CD4-positive, alpha-beta memory T cell (primary cell): ENCODE measurements at regions of chr12 and their contacts with region 1.

Region 1: GRCh38 chr12:8681041-8681902 is 16.5 kb upstream of the RIMKLB start:
- DNase-seq: no peak
- H3K4me3 ChIP-seq: no peak overlapping the region
- H3K4me3 Mint-ChIP-seq: no peak overlapping the region
- H3K27ac ChIP-seq: no peak overlapping the region
- H3K27ac Mint-ChIP-seq: peak overlapping the region in 1 of 7 donors; percentile 30
- H3K4me1 ChIP-seq: no peaks in the 10 kb centered on the region
- H3K4me1 Mint-ChIP-seq: peaks cover 0 to 9% (median 5%) of the 10 kb centered on the region in 4 donors
- H3K27me3 ChIP-seq: no peaks in the 10 kb centered on the region
- H3K27me3 Mint-ChIP-seq: peaks cover 5 to 10% of the 10 kb centered on the region in 2 donors

Region 2: GRCh38 chr12:8662593-8662992 is 18.7 kb before region 1 on chr12 and contains the start of gene MFAP5:
- CTCF ChIA-PET with region 1: interaction called, 17 read pairs
- POLR2A ChIA-PET with region 1: interaction called, 3 read pairs
- intact Hi-C with region 1: no loop called
- DNase-seq: no peak
- H3K4me3 ChIP-seq: no peak within 1 kb of the TSS
- H3K4me3 Mint-ChIP-seq: no peak within 1 kb of the TSS
- H3K27ac ChIP-seq: no peak within 1 kb of the TSS
- H3K27ac Mint-ChIP-seq: no peak within 1 kb of the TSS
- H3K4me1 ChIP-seq: no peaks in the 10 kb centered on the region
- H3K4me1 Mint-ChIP-seq: no peaks in the 10 kb centered on the region
- H3K27me3 ChIP-seq: no peaks in the 10 kb centered on the region
- H3K27me3 Mint-ChIP-seq: peaks cover 5% of the 10 kb centered on the region in 2 donors
- total RNA-seq, gene MFAP5: not detected

Region 3: GRCh38 chr12:8697476-8698131 is 16.3 kb after region 1 on chr12 and contains the start of gene RIMKLB:
- CTCF ChIA-PET with region 1: interaction called, 10 read pairs
- POLR2A ChIA-PET with region 1: interaction called, 13 read pairs
- intact Hi-C with region 1: no loop called
- DNase-seq: peak; percentile 69 to 77 (median 75)
- H3K4me3 ChIP-seq: peak within 1 kb of the TSS; percentile 38 to 74
- H3K4me3 Mint-ChIP-seq: peak within 1 kb of the TSS; percentile 90 to 96 (median 92)
- H3K27ac ChIP-seq: peak within 1 kb of the TSS; percentile 59
- H3K27ac Mint-ChIP-seq: peak within 1 kb of the TSS; percentile 87 to 97 (median 91)
- H3K4me1 ChIP-seq: peaks cover 18% of the 10 kb centered on the region
- H3K4me1 Mint-ChIP-seq: peaks cover 19 to 29% (median 22%) of the 10 kb centered on the region in 4 donors
- H3K27me3 ChIP-seq: no peaks in the 10 kb centered on the region
- H3K27me3 Mint-ChIP-seq: no peaks in the 10 kb centered on the region
- total RNA-seq, gene RIMKLB: 23.0 to 27.3 TPM

Region 4: DNA sequence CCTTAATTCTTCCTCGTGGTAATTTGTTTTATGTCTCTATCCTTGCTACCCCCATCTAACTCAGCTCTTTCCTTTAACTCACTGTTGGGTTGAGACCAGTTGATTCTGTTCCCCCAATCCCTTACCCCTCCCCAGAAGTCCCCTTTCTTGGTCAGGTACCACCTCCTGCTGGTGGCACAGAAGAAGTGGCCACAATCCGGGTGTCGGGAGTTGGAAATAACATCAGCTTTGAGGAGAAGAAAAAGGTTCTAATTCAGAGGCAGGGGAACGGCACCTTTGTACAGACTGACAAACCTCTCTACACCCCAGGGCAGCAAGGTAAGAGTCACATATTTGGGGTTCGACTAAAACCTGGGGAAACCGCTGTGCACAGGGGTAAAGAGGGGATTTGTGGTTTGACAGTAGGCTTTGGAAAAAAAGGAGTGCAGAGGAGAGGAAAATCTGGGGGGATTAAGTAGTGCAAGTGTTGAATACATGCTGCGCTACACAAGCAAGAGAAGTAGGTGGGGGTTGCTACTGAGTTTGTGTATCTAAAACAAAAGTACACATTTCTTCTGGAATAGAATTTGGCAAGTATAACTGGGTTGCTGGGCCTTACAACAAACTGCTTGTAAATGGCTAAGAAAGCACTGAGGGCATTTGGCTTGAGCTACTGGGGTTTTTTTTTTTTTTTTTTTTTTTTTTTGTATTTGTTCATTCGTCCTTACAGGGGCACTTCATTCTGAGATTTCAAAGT is 142.5 kb after region 1 on chr12:
- CTCF ChIA-PET with region 1: no interaction called
- POLR2A ChIA-PET with region 1: interaction called, 3 read pairs
- intact Hi-C with region 1: loop called (anchors 1 kb)
- DNase-seq: no peak
- H3K4me3 ChIP-seq: no peak overlapping the region
- H3K4me3 Mint-ChIP-seq: no peak overlapping the region
- H3K27ac ChIP-seq: no peak overlapping the region
- H3K27ac Mint-ChIP-seq: no peak overlapping the region
- H3K4me1 ChIP-seq: no peaks in the 10 kb centered on the region
- H3K4me1 Mint-ChIP-seq: peaks cover 0 to 2% (median 0%) of the 10 kb centered on the region in 4 donors
- H3K27me3 ChIP-seq: no peaks in the 10 kb centered on the region
- H3K27me3 Mint-ChIP-seq: peaks cover 4% of the 10 kb centered on the region in 2 donors

Region 5: DNA sequence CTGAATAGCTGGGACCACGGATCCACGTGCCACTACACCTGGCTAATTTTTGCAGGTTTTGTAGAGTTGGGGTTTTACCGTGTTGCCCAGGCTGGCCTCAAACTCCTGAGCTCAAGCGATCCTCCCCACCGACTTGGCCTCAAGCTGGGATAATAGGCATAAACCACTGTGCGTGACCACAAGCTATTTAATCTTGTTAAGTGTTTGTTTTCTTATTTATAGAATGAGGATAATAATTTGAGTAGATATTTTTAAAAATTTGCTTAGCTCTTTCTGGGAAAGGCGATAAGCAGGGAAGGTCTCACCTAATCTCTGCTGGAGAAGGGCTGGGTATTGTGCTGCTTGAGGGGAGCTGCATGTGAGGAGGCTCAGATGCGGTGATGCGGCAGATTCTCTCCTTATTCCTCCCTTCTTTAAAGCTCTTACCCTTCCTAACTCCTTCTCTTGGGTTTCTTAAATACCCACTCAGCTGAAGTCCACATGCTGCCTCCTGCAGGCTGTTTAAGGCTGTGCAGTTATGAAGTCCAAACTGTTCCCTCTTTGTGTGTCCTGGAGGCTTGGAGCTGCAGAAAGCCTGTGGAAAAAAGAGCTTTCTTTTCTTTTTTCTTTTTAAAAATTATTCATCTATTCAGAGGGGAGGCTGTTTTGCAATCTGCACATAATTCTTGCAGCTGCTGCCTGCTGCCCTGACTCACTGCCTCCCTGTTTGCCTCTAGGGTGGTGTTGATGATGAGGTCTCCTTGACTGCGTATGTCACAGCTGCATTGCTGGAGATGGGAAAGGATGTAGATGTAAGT is 179.1 kb after region 1 on chr12:
- CTCF ChIA-PET with region 1: interaction called, 56 read pairs
- POLR2A ChIA-PET with region 1: no interaction called
- intact Hi-C with region 1: loop called (anchors 1 kb)
- DNase-seq: peak in 4 of 5 donors; percentile 18 to 28 (median 25)
- H3K4me3 ChIP-seq: no peak overlapping the region
- H3K4me3 Mint-ChIP-seq: no peak overlapping the region
- H3K27ac ChIP-seq: no peak overlapping the region
- H3K27ac Mint-ChIP-seq: no peak overlapping the region
- H3K4me1 ChIP-seq: no peaks in the 10 kb centered on the region
- H3K4me1 Mint-ChIP-seq: no peaks in the 10 kb centered on the region
- H3K27me3 ChIP-seq: no peaks in the 10 kb centered on the region
- H3K27me3 Mint-ChIP-seq: peaks cover 0 to 4% of the 10 kb centered on the region in 2 donors